HCT116 (cell line): ENCODE measurements at regions of chr2 and their contacts with region 1.

Region 1: DNA sequence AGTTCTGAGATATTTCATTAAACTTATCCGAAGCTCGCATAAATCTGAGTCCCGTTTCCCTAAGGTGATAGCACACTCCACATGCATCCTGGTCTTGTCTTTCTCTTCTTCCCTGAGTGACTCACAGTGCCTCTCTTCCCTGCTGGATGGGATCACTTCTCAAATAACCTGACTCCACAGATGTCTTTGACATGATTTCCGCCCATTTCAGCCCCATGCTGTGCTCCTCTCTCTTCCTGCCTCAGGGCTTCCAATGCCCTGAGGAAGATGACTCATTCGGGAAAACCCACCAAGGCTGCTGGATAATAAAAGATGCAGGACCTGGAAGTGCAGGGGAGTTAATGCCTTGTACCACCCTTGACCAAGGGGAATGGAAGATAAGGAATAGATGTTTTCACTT is 441.7 kb upstream of the SOX11 start:
- DNase-seq: no peak
- ATAC-seq: no peak
- H3K4me3 ChIP-seq: no peak overlapping the region
- H3K27ac ChIP-seq: no peak overlapping the region
- H3K4me1 ChIP-seq: no peaks in the 10 kb centered on the region
- H3K27me3 ChIP-seq: no peaks in the 10 kb centered on the region
- CTCF ChIP-seq: no peak
- POLR2A ChIP-seq: no peak
- RAD21 ChIP-seq: no peak

Region 2: DNA sequence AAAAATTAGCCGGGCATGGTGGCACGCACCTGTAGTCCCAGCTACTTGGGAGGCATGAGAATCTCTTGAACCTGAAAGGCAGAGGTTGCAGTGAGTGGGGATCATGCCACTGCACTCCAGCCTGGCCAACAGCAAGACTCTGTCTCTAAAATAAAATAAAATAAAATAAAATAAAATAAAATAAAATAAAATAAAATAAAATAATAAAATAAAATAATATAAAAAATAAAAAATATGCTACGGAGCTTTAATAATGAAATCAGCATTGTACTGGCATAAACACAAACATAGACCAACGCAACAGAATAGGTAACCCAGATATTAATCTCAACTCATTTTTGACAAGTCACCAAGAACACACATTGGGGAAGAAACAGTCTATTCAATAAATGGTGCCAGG is 531.7 kb before region 1 on chr2:
- CTCF ChIA-PET with region 1: no interaction called
- POLR2A ChIA-PET with region 1: no interaction called
- RAD21 ChIA-PET with region 1: interaction called in 1 of 2 experiments, 10 read pairs
- intact Hi-C with region 1: no loop called
- DNase-seq: no peak
- ATAC-seq: no peak
- H3K4me3 ChIP-seq: no peak overlapping the region
- H3K27ac ChIP-seq: no peak overlapping the region
- H3K4me1 ChIP-seq: no peaks in the 10 kb centered on the region
- H3K27me3 ChIP-seq: no peaks in the 10 kb centered on the region
- CTCF ChIP-seq: no peak
- POLR2A ChIP-seq: no peak
- RAD21 ChIP-seq: no peak

Region 3: GRCh38 chr2:5227062-5227699 is 23.3 kb before region 1 on chr2:
- CTCF ChIA-PET with region 1: no interaction called
- POLR2A ChIA-PET with region 1: no interaction called
- RAD21 ChIA-PET with region 1: no interaction called
- intact Hi-C with region 1: no loop called
- DNase-seq: no peak
- ATAC-seq: no peak
- H3K4me3 ChIP-seq: no peak overlapping the region
- H3K27ac ChIP-seq: no peak overlapping the region
- H3K4me1 ChIP-seq: no peaks in the 10 kb centered on the region
- H3K27me3 ChIP-seq: no peaks in the 10 kb centered on the region
- CTCF ChIP-seq: no peak
- POLR2A ChIP-seq: no peak
- RAD21 ChIP-seq: no peak